Mucosa of descending colon (tissue), 3 donors: ENCODE measurements at regions of chr2 and their contacts with region 1.

Region 1: GRCh38 chr2:189466660-189467059 is 25.4 kb downstream of the WDR75 start:
- DNase-seq: peak in 1 of 3 donors; percentile 6
- ATAC-seq: peak; percentile 56
- H3K4me3 ChIP-seq: no peak overlapping the region
- H3K4me1 ChIP-seq: no peaks in the 10 kb centered on the region
- CTCF ChIP-seq: peak; percentile 35

Region 2: DNA sequence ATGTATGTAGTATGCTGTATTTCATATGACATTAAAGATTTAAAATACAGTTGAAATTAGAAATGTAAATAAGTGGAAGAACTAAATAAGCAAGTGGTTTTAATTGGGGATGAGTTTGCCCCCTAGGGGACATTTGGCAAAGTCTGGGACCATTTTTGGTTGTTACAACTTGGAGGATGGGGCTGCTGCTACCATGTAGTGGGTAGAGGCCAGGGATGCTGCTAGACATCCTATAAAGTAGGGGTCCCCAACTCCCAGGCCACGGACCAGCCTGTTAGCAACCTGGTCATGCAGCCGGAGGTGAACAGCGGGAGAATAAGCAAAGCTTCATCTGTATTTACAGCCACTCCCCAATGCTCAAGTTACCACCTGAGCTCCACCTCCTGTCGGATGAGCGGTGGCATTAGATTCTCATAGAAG is 166.7 kb after region 1 on chr2:
- intact Hi-C with region 1: loop called in 1 of 2 experiments (anchors 10 kb)
- DNase-seq: peak in 1 of 3 donors; percentile 24
- ATAC-seq: no peak
- H3K4me3 ChIP-seq: no peak overlapping the region
- H3K4me1 ChIP-seq: no peaks in the 10 kb centered on the region
- CTCF ChIP-seq: no peak